Right ventricle myocardium inferior (tissue), 1 donor: ENCODE measurements at regions of chr20 and their contacts with region 1.

Region 1: GRCh38 chr20:58236612-58237330 is 8.3 kb upstream of the ANKRD60 start:
- DNase-seq: peak; percentile 89
- ATAC-seq: peak; percentile 95

Region 2: DNA sequence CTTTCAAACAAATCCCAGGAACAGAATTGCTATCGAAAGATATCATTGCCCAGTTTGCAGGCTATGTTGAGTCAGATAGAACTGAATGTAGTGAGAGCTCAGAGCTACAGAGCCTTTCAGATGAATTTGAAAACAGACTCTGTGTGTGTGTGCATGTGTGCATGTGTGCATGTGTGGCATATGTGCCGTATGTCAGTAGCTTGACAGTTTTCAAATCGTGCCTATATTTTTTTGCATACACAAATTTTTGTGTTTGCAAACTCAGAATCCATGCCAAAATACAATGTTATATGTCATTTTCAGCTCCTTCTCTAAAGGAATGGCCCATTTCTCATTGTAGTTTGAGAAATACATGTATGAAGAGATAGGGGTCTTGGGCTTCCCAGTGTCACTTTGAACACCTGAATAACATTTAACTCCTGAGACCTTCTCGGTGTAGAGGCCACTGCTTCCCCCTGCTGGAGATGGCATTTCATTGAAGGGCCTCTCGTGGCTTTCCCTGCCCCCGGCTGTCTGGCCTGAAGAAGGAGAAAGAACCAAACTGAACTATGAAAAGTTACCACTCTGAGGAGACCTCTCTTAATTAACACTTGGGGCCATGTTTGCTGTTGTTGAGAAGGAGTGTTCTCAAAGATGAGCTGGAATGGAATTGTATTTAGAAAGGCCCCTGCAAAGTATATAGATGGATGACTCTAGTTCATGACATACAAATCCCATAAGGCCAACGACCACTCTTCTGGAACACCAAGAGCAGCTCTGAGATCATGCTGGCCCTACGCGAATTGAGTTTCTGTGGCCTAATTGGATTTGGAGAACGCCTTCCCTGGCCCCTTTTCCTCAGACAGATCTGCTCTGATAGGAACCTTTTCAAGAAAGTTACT is 211.0 kb after region 1 on chr20:
- intact Hi-C with region 1: loop called (anchors 1 kb)
- DNase-seq: no peak
- ATAC-seq: peak; percentile 62

Region 3: DNA sequence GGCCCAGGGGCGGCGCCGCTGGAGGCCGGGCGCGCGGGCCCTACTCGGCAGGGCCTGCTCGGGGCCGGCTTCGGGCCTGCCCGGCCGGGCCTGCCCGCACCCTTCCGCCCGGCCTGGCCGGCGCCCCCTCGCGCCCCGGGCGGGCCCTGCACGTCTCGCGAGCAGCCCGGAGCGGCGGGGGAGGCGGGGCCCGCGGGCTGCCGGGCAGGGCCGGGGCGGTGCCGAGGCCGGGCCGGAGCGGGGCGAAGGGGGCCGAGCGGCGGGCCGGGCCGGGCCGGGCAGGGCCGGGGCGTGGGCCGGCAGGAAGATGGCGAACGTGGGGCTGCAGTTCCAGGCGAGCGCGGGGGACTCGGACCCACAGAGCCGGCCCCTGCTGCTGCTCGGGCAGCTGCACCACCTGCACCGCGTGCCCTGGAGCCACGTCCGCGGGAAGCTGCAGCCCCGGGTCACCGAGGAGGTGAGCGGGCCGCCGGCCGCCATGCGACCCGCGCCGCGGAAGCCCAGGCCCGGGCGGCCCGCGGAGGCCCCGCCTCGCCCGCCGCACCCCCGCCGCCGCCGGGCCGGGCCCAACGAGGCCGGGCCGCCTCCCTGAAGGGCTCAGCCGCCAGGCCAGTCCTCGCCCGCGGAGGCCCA is 455.9 kb after region 1 on chr20 and contains the start of gene NPEPL1:
- intact Hi-C with region 1: loop called (anchors 10 kb)
- DNase-seq: peak; percentile 90
- ATAC-seq: peak; percentile 88
- total RNA-seq, gene NPEPL1: 23.3 TPM

Region 4: GRCh38 chr20:58839474-58839874 is 602.7 kb after region 1 on chr20:
- intact Hi-C with region 1: loop called (anchors 5 kb)
- DNase-seq: no peak
- ATAC-seq: peak; percentile 37